GM12878 (cell line): ENCODE measurements at regions of chr3 and their contacts with region 1.

Region 1: GRCh38 chr3:12578742-12579141 is 21.9 kb downstream of the MKRN2 start:
- DNase-seq: no peak
- ATAC-seq: no peak
- H3K4me3 ChIP-seq: no peak overlapping the region
- H3K27ac ChIP-seq: no peak overlapping the region
- H3K4me1 ChIP-seq: no peaks in the 10 kb centered on the region
- H3K27me3 ChIP-seq: no peaks in the 10 kb centered on the region
- CTCF ChIP-seq: 0 out of 6 replicates have a peak, but pooled peaks of 2 of the 3 experiments have one; percentile 8 to 12
- EP300 ChIP-seq: no peak
- POLR2A ChIP-seq: no peak
- RAD21 ChIP-seq: no peak

Region 2: DNA sequence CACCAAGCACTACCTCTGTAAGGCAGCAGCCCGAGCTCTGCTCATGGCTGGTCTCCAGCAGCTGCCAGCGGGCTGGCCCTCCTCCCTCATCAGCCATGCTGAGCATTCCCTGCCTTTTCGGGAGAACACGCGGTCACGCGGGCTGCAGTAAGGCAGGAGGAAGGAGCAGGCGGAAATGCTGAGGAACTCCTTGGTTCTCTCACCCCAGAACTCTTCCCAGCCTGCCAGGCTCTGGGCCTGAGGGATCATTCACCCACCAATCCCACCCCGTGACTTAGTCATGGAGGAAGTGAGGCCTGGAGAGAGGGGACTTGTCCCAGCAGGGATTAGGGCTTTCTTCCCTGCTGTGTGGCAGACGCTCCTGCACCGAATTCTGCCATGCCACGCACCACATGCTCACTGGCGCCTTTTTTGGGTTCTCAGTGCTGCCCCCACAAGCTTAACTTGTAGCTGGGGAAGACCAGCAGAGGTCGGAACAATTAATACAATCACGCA is 305.5 kb after region 1 on chr3:
- CTCF ChIA-PET with region 1: no interaction called
- POLR2A ChIA-PET with region 1: interaction called, 13 read pairs
- RAD21 ChIA-PET with region 1: no interaction called
- SMC1A ChIA-PET with region 1: no interaction called
- in situ Hi-C with region 1: no loop called
- intact Hi-C with region 1: no loop called
- DNase-seq: no peak
- ATAC-seq: no peak
- H3K4me3 ChIP-seq: no peak overlapping the region
- H3K27ac ChIP-seq: no peak overlapping the region
- H3K4me1 ChIP-seq: peaks cover 45% of the 10 kb centered on the region
- H3K27me3 ChIP-seq: no peaks in the 10 kb centered on the region
- CTCF ChIP-seq: no peak
- EP300 ChIP-seq: no peak
- POLR2A ChIP-seq: no peak
- RAD21 ChIP-seq: no peak